A673 (cell line): ENCODE measurements at regions of chr3 and their contacts with region 1.

Region 1: DNA sequence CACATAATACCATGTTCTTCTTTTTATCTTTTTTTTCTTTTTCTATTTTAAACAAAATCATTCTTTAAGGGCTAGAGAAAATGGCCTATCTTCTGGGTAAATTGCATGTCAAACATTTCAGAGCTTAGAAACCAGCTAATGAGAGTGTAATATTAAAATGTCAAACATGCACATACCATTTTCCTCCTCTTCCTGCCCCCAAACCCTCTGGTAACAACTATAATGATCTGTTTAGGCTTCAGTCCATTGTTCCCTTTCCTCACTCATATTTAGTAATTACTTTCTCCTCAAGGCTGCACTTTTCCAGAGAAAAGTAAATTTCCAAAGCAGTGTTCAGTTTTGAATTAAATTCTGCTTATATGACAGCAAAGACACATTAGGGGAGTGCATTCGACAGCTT is 224.3 kb upstream of the ROBO2 start:
- DNase-seq: no peak
- H3K4me3 ChIP-seq: no peak overlapping the region
- H3K27ac ChIP-seq: peak overlapping the region; percentile 10
- H3K4me1 ChIP-seq: peaks cover 33% of the 10 kb centered on the region
- H3K27me3 ChIP-seq: no peaks in the 10 kb centered on the region
- CTCF ChIP-seq: no peak

Region 2: GRCh38 chr3:76753599-76753998 is 62.0 kb before region 1 on chr3:
- CTCF ChIA-PET with region 1: no interaction called
- POLR2A ChIA-PET with region 1: no interaction called
- intact Hi-C with region 1: loop called (anchors 2 kb)
- DNase-seq: peak; percentile 48
- H3K4me3 ChIP-seq: no peak overlapping the region
- H3K27ac ChIP-seq: no peak overlapping the region
- H3K4me1 ChIP-seq: peaks cover 16% of the 10 kb centered on the region
- H3K27me3 ChIP-seq: no peaks in the 10 kb centered on the region
- CTCF ChIP-seq: peak; percentile 58

Region 3: GRCh38 chr3:77254967-77255831 is 439.6 kb after region 1 on chr3:
- CTCF ChIA-PET with region 1: no interaction called
- POLR2A ChIA-PET with region 1: no interaction called
- intact Hi-C with region 1: loop called (anchors 10 kb)
- DNase-seq: peak; percentile 68
- H3K4me3 ChIP-seq: no peak overlapping the region
- H3K27ac ChIP-seq: no peak overlapping the region
- H3K4me1 ChIP-seq: peaks cover 30% of the 10 kb centered on the region
- H3K27me3 ChIP-seq: no peaks in the 10 kb centered on the region
- CTCF ChIP-seq: peak; percentile 67

Region 4: DNA sequence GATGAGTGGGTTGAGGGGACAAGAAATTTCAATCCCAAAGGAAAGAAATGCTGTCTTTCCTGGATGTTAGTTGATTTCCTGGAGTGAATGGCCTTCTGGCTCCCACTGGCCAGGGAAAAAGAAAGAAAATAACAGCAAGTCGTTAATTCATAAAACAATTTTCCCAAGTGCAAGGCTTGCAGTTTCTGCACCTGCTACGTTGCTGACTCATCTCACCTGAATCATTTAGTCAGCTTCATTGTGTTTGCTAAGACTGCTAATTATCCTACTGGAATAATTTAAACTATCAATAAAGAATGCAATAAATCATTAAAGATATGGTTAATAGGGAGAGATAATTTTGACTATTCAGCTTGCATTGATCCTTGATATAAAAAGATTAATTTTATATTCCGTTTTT is 612.0 kb after region 1 on chr3:
- CTCF ChIA-PET with region 1: interaction called, 5 read pairs
- POLR2A ChIA-PET with region 1: interaction called, 33 read pairs
- intact Hi-C with region 1: loop called (anchors 5 kb)
- DNase-seq: no peak
- H3K4me3 ChIP-seq: no peak overlapping the region
- H3K27ac ChIP-seq: peak overlapping the region; percentile 85
- H3K4me1 ChIP-seq: peaks cover 28% of the 10 kb centered on the region
- H3K27me3 ChIP-seq: no peaks in the 10 kb centered on the region
- CTCF ChIP-seq: no peak